Astrocyte of the cerebellum (primary cell): ENCODE measurements at regions of chr6 and their contacts with region 1.

Region 1: GRCh38 chr6:1153696-1154245 is 158.1 kb upstream of the FOXQ1 start:
- DNase-seq: no peak
- H3K4me3 ChIP-seq: no peak overlapping the region
- CTCF ChIP-seq: no peak

Region 2: DNA sequence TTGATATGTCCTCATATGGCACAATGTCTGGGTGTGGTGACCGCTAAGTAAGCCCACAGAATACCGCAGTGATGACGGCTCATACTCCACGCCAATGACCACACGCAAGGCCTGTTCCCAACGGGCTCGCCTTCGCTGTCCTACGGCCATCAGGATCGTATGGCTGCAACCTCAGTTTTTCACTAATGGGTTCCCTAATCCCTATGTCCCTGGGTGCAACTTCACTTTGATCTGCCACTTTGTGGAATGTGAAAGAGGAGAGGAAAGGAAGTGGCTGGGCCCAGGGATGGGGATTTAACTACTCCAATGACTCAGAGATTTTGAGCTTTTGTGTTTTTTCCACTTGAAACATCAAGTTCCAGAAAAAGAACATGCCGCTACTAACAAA is 46.9 kb after region 1 on chr6:
- in situ Hi-C with region 1: loop called (anchors 5 kb)
- DNase-seq: no peak
- H3K4me3 ChIP-seq: no peak overlapping the region
- CTCF ChIP-seq: no peak

Region 3: GRCh38 chr6:1215023-1215422 is 61.3 kb after region 1 on chr6:
- in situ Hi-C with region 1: no loop called
- DNase-seq: no peak
- H3K4me3 ChIP-seq: no peak overlapping the region
- CTCF ChIP-seq: no peak